Activated naive CD8-positive, alpha-beta T cell treated with anti-CD3 and anti-CD28 coated beads, Interleukin-2, amount 10 ng/mL, durations not matched to agents 7 days and 5 days (primary cell): ENCODE measurements at regions of chr2 and their contacts with region 1.

Region 1: DNA sequence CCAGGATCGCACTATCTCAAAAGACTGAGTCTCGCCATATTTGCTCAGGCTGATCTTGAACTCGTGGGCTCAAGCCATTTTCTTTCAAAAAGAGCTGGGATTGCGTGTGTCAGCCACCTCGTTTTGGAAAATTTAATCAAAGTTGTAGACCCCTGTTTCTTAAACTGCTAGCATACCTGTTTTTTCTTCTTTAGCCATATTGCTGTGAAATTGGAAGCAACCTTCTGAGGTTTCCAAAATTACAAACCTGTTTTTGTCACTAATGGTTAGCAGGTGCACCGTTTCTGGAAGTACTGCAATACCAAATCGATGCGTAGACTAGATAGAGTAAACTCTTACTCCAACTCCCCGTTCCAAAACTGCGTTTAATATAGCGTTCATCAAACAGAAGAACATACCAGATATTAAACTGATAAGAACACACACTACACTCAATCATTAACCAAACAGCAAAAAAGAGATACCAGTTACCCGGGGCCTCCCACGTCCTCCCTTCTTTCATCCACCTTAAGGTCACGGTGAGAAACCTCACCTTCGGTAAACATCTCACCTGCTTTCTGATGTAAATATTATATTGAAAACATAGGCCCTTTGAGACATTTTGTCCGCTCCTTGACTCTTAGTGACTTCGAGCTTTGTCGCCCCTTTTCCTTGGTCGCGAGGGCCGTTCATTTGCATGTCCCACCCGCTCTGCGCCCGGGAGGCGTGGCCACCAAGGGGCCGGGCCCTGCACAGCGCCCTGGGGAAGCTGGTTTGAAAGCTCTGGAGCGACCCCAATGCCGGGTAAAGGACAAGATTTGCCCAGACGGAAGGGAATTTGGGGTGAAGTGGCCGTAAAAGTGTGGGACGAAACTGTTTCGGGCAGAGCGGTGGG is at the start of gene RNU2-63P:
- DNase-seq: peak; percentile 87
- ATAC-seq: peak; percentile 87
- H3K4me3 Mint-ChIP-seq: peak within 1 kb of the TSS; percentile 98
- H3K27ac Mint-ChIP-seq: peak within 1 kb of the TSS; percentile 96
- H3K4me1 Mint-ChIP-seq: peaks cover 18% of the 10 kb centered on the region
- H3K27me3 Mint-ChIP-seq: peaks cover 3% of the 10 kb centered on the region
- total RNA-seq, gene RNU2-63P: 21.5 to 24.3 TPM

Region 2: GRCh38 chr2:88027697-88028389 is 11.5 kb after region 1 on chr2:
- POLR2A ChIA-PET with region 1: interaction called, 12 read pairs
- DNase-seq: no peak
- ATAC-seq: peak; percentile 42
- H3K4me3 Mint-ChIP-seq: peak overlapping the region; percentile 29
- H3K27ac Mint-ChIP-seq: peak overlapping the region; percentile 76
- H3K4me1 Mint-ChIP-seq: peaks cover 9% of the 10 kb centered on the region
- H3K27me3 Mint-ChIP-seq: no peaks in the 10 kb centered on the region

Region 3: DNA sequence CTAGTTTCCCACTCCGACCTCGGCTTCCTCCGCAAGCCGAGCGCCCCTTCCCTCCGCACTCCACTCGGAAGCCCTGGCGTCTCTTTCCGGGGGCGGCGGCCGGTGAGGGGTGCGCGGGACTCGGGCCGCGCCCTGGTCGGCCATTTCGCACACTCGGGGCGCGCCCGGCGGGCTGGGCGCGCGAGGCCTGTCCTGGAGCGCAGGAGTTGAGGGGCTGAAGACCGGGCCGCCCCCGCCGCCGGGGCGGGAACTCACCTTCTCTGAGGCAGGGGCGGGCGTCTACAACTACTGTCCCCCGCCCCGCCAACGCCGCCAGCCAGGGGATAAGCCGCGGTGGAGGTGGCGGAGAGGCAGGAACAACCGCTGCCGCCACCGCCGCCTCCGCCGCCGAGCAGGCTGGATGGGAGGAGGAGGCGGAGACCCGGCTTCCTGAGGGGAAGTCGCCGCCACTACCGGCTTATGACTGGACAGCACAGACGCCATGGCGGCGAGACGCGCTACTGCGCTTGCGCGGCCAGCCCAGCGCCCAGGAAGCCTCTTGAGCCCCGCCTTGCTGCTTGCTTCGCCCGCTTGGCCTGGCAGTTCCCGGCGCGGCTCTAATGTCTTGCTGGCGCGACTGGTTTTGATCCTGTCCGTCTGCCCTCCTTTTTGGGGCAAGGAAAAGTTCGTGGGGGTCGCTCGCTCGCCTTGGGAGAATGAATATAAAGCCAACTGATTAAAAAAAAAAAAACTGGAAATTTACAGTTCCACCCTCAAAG is 39.2 kb after region 1 on chr2 and contains the start of gene KRCC1:
- POLR2A ChIA-PET with region 1: interaction called, 10 read pairs
- DNase-seq: peak; percentile 95
- ATAC-seq: peak; percentile 97
- H3K4me3 Mint-ChIP-seq: peak within 1 kb of the TSS; percentile 92
- H3K27ac Mint-ChIP-seq: peak within 1 kb of the TSS; percentile 93
- H3K4me1 Mint-ChIP-seq: peaks cover 32% of the 10 kb centered on the region
- H3K27me3 Mint-ChIP-seq: no peaks in the 10 kb centered on the region
- total RNA-seq, gene KRCC1: 21.0 to 21.6 TPM

Region 4: GRCh38 chr2:88582030-88582429 is 565.7 kb after region 1 on chr2:
- POLR2A ChIA-PET with region 1: no interaction called
- DNase-seq: no peak
- ATAC-seq: no peak
- H3K4me3 Mint-ChIP-seq: no peak overlapping the region
- H3K27ac Mint-ChIP-seq: no peak overlapping the region
- H3K4me1 Mint-ChIP-seq: no peaks in the 10 kb centered on the region
- H3K27me3 Mint-ChIP-seq: no peaks in the 10 kb centered on the region